ENCODE measurements at regions of chr6 and their contacts with region 1.

Region 1: GRCh38 chr6:107982486-107982885 is 24.5 kb upstream of the SEC63 start:
- DNase-seq: no peak
- ATAC-seq: no peak
- H3K4me3 ChIP-seq: no peak overlapping the region
- H3K27ac ChIP-seq: no peak overlapping the region
- H3K4me1 ChIP-seq: no peaks in the 10 kb centered on the region
- H3K27me3 ChIP-seq: no peaks in the 10 kb centered on the region
- CTCF ChIP-seq: no peak

Region 2: GRCh38 chr6:107800564-107801164 is 181.8 kb before region 1 on chr6:
- CTCF ChIA-PET with region 1: no interaction called
- POLR2A ChIA-PET with region 1: no interaction called
- in situ Hi-C with region 1: no loop called
- intact Hi-C with region 1: no loop called
- DNase-seq: no peak
- ATAC-seq: peak; percentile 66; the same call in 1 of the 2 replicates
- H3K4me3 ChIP-seq: no peak overlapping the region
- H3K27ac ChIP-seq: no peak overlapping the region
- H3K4me1 ChIP-seq: no peaks in the 10 kb centered on the region
- H3K27me3 ChIP-seq: peaks cover 50% of the 10 kb centered on the region
- CTCF ChIP-seq: peak; percentile 73

Region 3: GRCh38 chr6:108526739-108527174 is 544.3 kb after region 1 on chr6:
- CTCF ChIA-PET with region 1: interaction called, 3 read pairs
- POLR2A ChIA-PET with region 1: no interaction called
- in situ Hi-C with region 1: no loop called
- intact Hi-C with region 1: loop called (anchors 5 kb)
- DNase-seq: peak; percentile 42
- ATAC-seq: peak; percentile 69
- H3K4me3 ChIP-seq: no peak overlapping the region
- H3K27ac ChIP-seq: no peak overlapping the region
- H3K4me1 ChIP-seq: no peaks in the 10 kb centered on the region
- H3K27me3 ChIP-seq: no peaks in the 10 kb centered on the region
- CTCF ChIP-seq: peak; percentile 94

Measured in Panc1 (cell line).